A549 (cell line): ENCODE measurements at regions of chr15 and their contacts with region 1.

Region 1: DNA sequence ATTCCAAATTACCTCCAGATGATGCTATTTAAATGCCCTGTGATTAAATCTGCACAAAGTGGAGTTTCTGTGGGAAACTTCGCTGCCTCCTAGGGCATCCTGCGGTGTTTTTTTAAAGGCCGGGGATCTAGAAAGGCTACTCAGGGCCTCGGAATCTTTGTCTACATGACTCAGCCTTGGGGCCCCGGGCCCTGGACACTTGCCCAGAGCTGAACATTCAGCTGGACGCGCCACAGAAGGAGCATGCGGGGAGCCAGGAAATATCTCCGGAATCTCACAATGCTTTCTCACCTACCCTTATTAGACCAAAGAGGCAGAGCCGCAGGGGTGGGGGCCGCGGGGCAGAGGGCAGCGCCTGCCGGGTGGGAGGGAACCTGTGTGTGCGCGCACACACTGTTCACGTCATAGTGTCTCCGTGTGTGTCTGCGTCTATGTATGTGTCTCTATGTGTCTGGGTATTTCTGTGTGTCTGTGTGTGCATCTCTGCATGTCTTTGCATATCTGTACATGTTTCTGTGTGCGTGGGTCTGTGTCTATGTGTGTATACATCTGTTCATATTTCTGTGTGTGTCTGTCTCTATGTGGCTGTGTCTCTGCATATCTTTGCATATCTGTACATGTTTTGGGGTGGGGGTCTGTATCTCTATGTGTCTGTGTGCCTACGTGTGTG is 145.4 kb upstream of the TPM1 start:
- DNase-seq: peak; percentile 96 to 99
- ATAC-seq: peak; percentile 81 to 88
- H3K4me3 ChIP-seq: peak overlapping the region; percentile 10; the same call in 2 of the 3 replicates
- H3K27ac ChIP-seq: peak overlapping the region; percentile 98 to 99
- H3K4me1 ChIP-seq: peaks cover 72% of the 10 kb centered on the region
- CTCF ChIP-seq: no peak
- EP300 ChIP-seq: peak; percentile 94 to 97
- POLR2A ChIP-seq: no peak
- RAD21 ChIP-seq: peak; percentile 43 to 75

Region 2: DNA sequence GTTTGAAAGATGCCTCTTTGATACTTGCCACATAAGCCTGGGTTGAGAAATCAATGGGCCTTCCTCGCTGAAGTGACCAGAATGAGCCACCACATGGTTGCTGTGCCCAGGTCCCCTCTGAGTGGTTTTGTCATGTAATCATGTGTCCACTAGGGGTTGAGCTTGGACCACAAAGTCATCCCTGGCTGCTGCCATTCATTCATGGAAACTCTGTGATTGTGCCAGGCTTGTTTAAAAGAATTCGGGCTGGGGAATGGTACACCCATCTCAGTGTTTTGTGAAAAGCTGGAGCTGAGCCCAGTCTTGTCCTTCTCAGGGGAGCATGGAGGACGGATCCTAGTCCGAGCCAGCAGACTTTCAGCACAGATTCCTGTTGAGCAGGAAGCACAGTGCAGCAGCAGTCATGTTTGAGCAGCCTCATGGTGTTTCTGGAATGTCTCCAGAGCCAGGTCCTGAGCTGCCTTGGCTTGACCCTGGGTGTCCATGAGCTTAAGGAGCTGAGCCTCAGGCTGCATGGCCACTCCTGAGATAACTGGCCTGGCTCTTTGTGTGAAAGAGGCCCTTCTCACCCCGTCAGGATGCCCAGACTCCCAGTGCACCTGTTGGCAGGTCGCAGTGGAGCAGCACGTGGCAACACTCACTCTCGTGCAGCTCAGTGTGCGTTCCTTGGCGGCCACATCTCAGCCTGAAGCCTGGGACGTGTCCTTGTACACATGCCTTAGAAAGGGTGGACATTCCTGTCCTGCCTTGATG is 114.9 kb before region 1 on chr15:
- CTCF ChIA-PET with region 1: interaction called, 11 read pairs
- POLR2A ChIA-PET with region 1: interaction called, 4 read pairs
- DNase-seq: peak; percentile 81 to 90
- ATAC-seq: peak; percentile 93 to 95
- H3K4me3 ChIP-seq: no peak overlapping the region
- H3K27ac ChIP-seq: peak overlapping the region; percentile 71 to 82
- H3K4me1 ChIP-seq: peaks cover 42% of the 10 kb centered on the region
- CTCF ChIP-seq: peak; percentile 98
- EP300 ChIP-seq: no peak
- POLR2A ChIP-seq: no peak
- RAD21 ChIP-seq: peak; percentile 100

Region 3: DNA sequence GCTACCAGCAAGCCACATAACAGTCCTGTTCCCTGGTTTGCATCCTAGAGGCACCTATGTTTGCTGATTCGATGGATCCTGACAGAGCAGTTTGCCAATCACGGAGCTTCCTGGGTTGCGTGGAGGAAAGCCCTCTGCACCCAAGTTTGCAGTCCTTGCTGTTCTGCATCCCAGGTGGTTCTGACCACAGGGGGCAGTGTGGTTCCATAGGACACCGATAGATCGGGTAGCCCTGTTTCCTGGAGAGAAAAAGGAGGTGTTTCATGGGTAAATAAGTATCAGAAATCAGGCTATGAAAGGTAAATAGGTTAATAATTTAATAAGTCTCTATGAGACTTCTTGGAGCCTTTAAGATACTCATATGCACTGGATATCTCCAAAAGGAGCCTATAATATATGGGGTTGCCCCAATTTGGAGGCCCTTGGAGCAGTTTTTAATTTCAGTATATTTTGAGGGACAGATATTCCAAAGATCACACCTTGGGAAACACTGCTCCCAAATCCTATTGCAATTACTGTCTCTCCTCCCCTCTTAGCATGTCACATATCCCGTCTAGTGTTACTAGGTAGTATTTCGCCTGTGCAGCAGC is 49.1 kb before region 1 on chr15:
- CTCF ChIA-PET with region 1: interaction called, 5 read pairs
- POLR2A ChIA-PET with region 1: interaction called, 19 read pairs
- DNase-seq: peak; percentile 79 to 89
- ATAC-seq: peak in 1 of 2 experiments; percentile 58; a peak in 3 of 6 replicates
- H3K4me3 ChIP-seq: no peak overlapping the region
- H3K27ac ChIP-seq: peak overlapping the region; percentile 91
- H3K4me1 ChIP-seq: peaks cover 77% of the 10 kb centered on the region
- CTCF ChIP-seq: peak; percentile 70
- EP300 ChIP-seq: no peak
- POLR2A ChIP-seq: no peak
- RAD21 ChIP-seq: peak; percentile 84 to 93

Region 4: GRCh38 chr15:62862717-62863116 is 34.4 kb before region 1 on chr15:
- CTCF ChIA-PET with region 1: no interaction called
- POLR2A ChIA-PET with region 1: no interaction called
- DNase-seq: no peak
- ATAC-seq: no peak
- H3K4me3 ChIP-seq: no peak overlapping the region
- H3K27ac ChIP-seq: no peak overlapping the region
- H3K4me1 ChIP-seq: peaks cover 12% of the 10 kb centered on the region
- CTCF ChIP-seq: no peak
- EP300 ChIP-seq: no peak
- POLR2A ChIP-seq: no peak
- RAD21 ChIP-seq: no peak

Region 5: GRCh38 chr15:62874959-62875625 is 22.0 kb before region 1 on chr15:
- CTCF ChIA-PET with region 1: interaction called, 12 read pairs
- POLR2A ChIA-PET with region 1: no interaction called
- DNase-seq: no peak
- ATAC-seq: no peak
- H3K4me3 ChIP-seq: no peak overlapping the region
- H3K27ac ChIP-seq: peak overlapping the region in 1 of 2 experiments; percentile 30; a peak in 2 of 6 replicates
- H3K4me1 ChIP-seq: no peaks in the 10 kb centered on the region
- CTCF ChIP-seq: no peak
- EP300 ChIP-seq: no peak
- POLR2A ChIP-seq: no peak
- RAD21 ChIP-seq: no peak

Region 6: DNA sequence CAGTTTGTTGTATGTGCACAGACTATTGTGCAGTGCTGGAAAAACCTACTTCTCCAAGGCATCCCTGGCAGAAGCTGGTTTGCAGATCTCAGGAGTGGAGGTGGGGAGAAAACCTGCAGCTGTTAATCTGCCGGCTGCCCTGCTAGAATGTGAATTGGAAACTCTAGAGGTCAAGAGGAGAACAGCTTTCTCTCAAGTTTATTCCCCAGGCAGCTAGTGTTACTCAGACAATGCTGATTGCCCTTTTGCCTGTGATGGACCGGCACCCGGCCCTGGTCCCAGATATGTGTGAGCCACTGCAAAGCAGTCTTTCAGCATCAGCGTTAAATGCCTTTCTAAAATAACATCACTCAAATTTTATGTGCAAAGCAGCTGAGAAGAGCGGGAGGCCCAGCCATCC is 15.7 kb after region 1 on chr15:
- CTCF ChIA-PET with region 1: interaction called, 18 read pairs
- POLR2A ChIA-PET with region 1: interaction called, 6 read pairs
- DNase-seq: peak in 1 of 2 experiments; percentile 39
- ATAC-seq: peak; percentile 89 to 92
- H3K4me3 ChIP-seq: no peak overlapping the region
- H3K27ac ChIP-seq: peak overlapping the region in 1 of 2 experiments; percentile 34; a peak in 2 of 6 replicates
- H3K4me1 ChIP-seq: peaks cover 12% of the 10 kb centered on the region
- CTCF ChIP-seq: no peak
- EP300 ChIP-seq: no peak
- POLR2A ChIP-seq: no peak
- RAD21 ChIP-seq: 0 out of 5 replicates have a peak, but pooled peaks of 1 of the 2 experiments have one; percentile 12

Region 7: DNA sequence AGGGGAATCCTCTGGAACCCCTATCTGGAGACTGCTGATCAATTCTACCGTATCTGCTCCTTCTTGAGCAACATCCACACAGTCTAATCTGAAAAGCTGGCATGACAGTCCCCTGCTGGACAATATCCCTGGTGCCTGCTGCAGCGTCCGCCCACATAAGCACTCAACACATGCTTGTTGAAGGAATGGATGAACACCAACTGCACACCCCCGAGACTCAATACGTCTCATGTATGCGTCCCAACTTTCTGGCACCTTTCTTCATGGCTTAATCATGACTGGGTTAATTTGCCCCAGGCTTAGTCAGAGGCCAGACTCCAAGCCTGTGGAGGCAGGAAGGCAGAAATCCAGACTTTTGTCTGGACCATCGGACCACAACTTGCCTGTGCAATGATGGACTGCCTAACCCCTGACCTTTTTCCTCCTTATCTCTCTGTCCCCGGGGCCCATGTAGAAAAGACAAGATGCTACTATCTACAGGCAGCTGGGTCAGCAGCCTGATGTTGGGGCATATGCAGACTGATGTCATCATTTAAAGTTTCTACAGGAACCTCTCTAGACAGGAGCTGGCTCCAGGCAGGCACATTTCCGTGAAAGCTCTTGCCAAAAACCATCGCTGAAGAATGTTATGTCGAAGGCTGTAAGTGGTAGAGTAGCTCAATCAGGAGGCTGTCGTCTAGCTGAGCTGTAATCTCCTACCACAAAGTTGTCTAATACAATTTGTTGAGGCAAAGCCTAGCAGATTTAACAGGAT is 31.3 kb after region 1 on chr15:
- CTCF ChIA-PET with region 1: interaction called, 11 read pairs
- POLR2A ChIA-PET with region 1: interaction called, 9 read pairs
- DNase-seq: peak; percentile 76 to 87
- ATAC-seq: peak; percentile 88 to 93
- H3K4me3 ChIP-seq: no peak overlapping the region
- H3K27ac ChIP-seq: peak overlapping the region; percentile 79 to 89
- H3K4me1 ChIP-seq: peaks cover 42% of the 10 kb centered on the region
- CTCF ChIP-seq: peak; percentile 49; the same call in 2 of the 3 replicates
- EP300 ChIP-seq: peak; percentile 66 to 68; a peak in 3 of 5 replicates
- POLR2A ChIP-seq: no peak
- RAD21 ChIP-seq: peak; percentile 61 to 65

Region 8: DNA sequence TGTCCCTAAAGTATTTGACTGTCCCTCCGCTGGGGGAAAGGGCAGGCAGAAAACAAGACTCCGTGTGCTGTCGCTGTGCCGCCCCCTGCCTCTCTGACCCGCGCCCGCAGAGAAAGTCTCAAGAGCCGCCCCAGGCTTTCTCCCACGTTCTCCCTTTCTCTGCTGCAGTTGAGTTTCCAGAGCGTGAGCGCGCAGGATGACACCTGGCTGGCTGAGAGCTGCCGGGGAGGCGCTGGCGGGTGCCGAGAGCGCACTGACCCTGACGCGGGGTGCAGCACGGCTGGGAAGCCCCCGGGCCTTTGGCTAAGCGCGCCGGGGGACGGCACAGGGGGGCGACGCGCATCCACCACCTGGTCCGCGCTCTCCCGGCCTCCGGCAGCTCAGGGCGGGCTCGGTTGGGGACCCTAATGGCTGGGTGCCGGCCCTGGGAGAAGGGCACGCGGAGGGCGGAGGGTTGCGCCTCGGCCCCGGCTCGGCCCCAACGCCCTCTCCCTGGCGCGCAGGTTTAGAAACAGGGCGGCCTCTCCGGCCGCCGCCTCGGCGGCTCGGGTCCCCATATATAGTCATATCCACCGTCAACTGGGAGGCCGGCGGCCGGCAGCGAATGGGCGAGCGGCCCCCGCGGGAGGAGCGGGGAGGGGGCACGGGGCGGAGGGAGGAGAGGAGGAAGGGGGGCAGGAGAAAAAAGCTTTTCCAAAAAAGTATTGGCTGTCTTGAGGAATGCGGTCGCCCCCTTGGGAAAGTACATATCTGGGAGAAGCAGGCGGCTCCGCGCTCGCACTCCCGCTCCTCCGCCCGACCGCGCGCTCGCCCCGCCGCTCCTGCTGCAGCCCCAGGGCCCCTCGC is 145.1 kb after region 1 on chr15 and contains the start of gene TPM1:
- CTCF ChIA-PET with region 1: interaction called, 76 read pairs
- POLR2A ChIA-PET with region 1: interaction called, 98 read pairs
- DNase-seq: peak; percentile 92 to 95
- ATAC-seq: peak; percentile 76 to 84
- H3K4me3 ChIP-seq: peak within 1 kb of the TSS; percentile 87
- H3K27ac ChIP-seq: peak within 1 kb of the TSS; percentile 94 to 97
- H3K4me1 ChIP-seq: peaks cover 41% of the 10 kb centered on the region
- CTCF ChIP-seq: peak; percentile 13; the same call in 2 of the 3 replicates
- EP300 ChIP-seq: no peak
- POLR2A ChIP-seq: peak; percentile 94
- RAD21 ChIP-seq: peak; percentile 39 to 68
- polyA plus RNA-seq, gene TPM1: 777 and 894 TPM in 2 replicates